ENCODE measurements at regions of chr2 and their contacts with region 1.

Region 1: GRCh38 chr2:235106874-235107639 is 155.2 kb downstream of the SH3BP4 start:
- DNase-seq: peak; percentile 81 to 82
- ATAC-seq: peak; percentile 96 to 98
- H3K4me3 ChIP-seq: no peak overlapping the region
- H3K27ac ChIP-seq: peak overlapping the region; percentile 16 to 89; a peak in 5 of 6 replicates
- H3K4me1 ChIP-seq: peaks cover 4% of the 10 kb centered on the region; the same call in 2 of the 3 replicates
- CTCF ChIP-seq: peak; percentile 89
- EP300 ChIP-seq: no peak
- POLR2A ChIP-seq: no peak
- RAD21 ChIP-seq: peak; percentile 95 to 97

Region 2: DNA sequence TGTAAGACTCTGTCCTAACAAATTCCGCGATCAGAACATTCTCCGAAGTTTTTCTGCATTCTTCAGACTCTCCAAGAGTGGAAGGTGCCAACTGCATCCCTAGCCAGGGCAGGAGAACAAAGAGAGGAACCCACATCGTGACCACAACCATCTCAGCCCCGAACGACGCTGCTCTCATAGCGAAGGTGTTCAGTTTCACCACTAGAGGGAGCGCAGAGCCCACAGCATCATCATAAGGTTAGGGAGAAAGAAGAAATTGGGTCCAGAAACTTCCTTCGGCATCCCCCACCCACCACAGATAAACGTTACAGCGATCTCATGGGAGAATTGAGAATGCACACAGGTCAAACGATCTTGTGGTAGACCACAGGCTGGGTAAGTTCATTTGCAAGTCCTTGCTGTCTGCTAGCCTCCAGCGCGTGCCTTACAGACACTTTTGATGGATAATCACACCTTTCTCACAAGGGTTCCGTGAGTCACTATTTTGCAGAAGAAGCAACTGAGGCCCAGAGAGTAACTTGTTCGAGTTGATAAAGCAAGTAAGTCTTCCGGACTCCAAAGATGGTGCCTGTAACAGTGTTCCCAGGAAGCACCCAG is 556.4 kb before region 1 on chr2:
- CTCF ChIA-PET with region 1: interaction called, 163 read pairs
- POLR2A ChIA-PET with region 1: no interaction called
- DNase-seq: peak; percentile 63 to 74
- ATAC-seq: peak; percentile 93 to 97
- H3K4me3 ChIP-seq: no peak overlapping the region
- H3K27ac ChIP-seq: peak overlapping the region; percentile 52 to 65
- H3K4me1 ChIP-seq: peaks cover 6% of the 10 kb centered on the region; the same call in 2 of the 3 replicates
- CTCF ChIP-seq: peak; percentile 98
- EP300 ChIP-seq: no peak
- POLR2A ChIP-seq: no peak
- RAD21 ChIP-seq: peak; percentile 99 to 100

Region 3: DNA sequence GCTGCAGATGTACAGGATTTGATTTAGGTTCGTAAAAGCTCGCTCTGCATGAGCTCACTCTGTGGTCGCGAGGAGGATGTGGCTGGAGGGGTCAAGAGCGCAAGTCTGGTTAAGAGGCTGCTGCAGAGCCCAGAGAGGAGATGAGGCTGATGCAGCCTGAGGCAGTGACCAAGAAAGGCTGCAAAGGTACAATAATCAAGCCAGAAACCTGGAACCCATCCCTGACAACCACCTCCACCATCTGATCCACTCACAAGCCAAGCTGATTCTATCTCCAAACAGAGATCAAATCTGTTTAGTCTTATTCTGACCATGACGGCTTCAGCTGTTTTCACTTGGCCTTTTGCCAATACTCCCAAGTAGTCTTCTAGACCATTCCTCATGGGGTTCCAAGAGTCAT is 551.3 kb before region 1 on chr2:
- CTCF ChIA-PET with region 1: interaction called, 163 read pairs
- POLR2A ChIA-PET with region 1: no interaction called
- DNase-seq: no peak
- ATAC-seq: no peak
- H3K4me3 ChIP-seq: no peak overlapping the region
- H3K27ac ChIP-seq: peak overlapping the region; percentile 52 to 77; a peak in 5 of 6 replicates
- H3K4me1 ChIP-seq: peaks cover 30% of the 10 kb centered on the region
- CTCF ChIP-seq: no peak
- EP300 ChIP-seq: no peak
- POLR2A ChIP-seq: no peak
- RAD21 ChIP-seq: no peak

Region 4: GRCh38 chr2:234722176-234722575 is 384.9 kb before region 1 on chr2:
- CTCF ChIA-PET with region 1: no interaction called
- POLR2A ChIA-PET with region 1: no interaction called
- DNase-seq: no peak
- ATAC-seq: no peak
- H3K4me3 ChIP-seq: no peak overlapping the region
- H3K27ac ChIP-seq: no peak overlapping the region
- H3K4me1 ChIP-seq: 0 out of 3 replicates have a peak, but pooled peaks cover 3% of the 10 kb centered on the region
- CTCF ChIP-seq: no peak
- EP300 ChIP-seq: no peak
- POLR2A ChIP-seq: no peak
- RAD21 ChIP-seq: no peak